ENCODE measurements at regions of chr3 and their contacts with region 1.

Region 1: GRCh38 chr3:179147873-179148615 is at the start of gene PIK3CA:
- DNase-seq: peak; percentile 71 to 99 (median 95)
- ATAC-seq: peak; percentile 88
- H3K4me3 ChIP-seq: peak within 1 kb of the TSS; percentile 87
- H3K4me3 Mint-ChIP-seq: peak within 1 kb of the TSS in 7 of 10 donors; percentile 95 to 100 (median 97)
- H3K27ac ChIP-seq: peak within 1 kb of the TSS; percentile 93
- H3K27ac Mint-ChIP-seq: peak within 1 kb of the TSS in 8 of 9 donors; percentile 94 to 99 (median 96)
- H3K4me1 ChIP-seq: peaks cover 15 to 17% of the 10 kb centered on the region in 2 donors
- H3K4me1 Mint-ChIP-seq: peaks cover 27 to 47% (median 41%) of the 10 kb centered on the region in 7 donors
- H3K27me3 ChIP-seq: no peaks in the 10 kb centered on the region
- H3K27me3 Mint-ChIP-seq: peaks cover 0 to 21% (median 0%) of the 10 kb centered on the region in 5 donors
- total RNA-seq, gene PIK3CA: 27.4 to 58.1 (median 43.7) TPM

Region 2: DNA sequence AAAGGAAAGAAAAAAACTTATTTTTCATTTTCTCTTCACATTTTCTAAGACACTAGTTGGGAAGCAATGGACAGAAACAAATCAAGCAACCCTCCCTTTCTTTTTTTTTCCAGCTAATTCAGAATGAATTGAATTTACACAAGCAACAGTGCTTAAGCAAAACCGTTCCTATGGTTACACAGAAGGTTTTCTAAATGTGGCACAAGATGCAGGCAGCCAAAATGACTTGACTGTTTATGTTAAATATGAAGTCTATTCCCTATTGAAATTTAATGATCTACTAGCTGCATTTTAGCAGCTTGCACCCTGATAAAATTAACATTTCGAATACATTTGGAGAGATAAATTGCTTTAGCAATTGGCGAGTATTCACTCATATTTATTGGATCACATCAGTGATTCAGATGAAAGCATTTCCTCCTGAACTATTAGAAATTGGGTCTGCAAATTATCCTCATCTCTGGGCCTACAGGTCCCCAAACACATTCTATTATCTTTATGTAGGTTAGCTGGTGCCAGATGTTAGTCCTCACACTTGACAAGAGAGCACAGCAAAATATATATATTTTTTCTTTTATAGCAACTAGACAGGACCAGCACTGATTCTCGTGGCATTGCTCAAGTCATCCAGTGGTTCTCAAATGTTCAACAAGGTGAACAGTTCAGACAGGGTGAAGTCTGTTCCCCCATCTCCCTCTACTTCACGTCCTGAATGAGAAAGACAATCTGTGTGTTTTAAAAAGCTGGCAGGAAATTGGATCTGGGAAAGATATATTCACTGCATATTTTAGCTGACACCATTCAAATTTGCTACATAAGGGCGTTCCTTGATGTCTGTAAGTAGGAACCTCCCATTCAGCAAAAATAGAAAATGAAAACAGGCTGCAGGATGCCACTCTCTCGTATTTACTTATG is 1075.4 kb before region 1 on chr3:
- CTCF ChIA-PET with region 1: no interaction called
- POLR2A ChIA-PET with region 1: no interaction called
- intact Hi-C with region 1: no loop called
- DNase-seq: no peak
- ATAC-seq: no peak
- H3K4me3 ChIP-seq: no peak overlapping the region
- H3K4me3 Mint-ChIP-seq: no peak overlapping the region
- H3K27ac ChIP-seq: no peak overlapping the region
- H3K27ac Mint-ChIP-seq: no peak overlapping the region
- H3K4me1 ChIP-seq: no peaks in the 10 kb centered on the region
- H3K4me1 Mint-ChIP-seq: peaks cover 4 to 6% (median 5%) of the 10 kb centered on the region in 7 donors
- H3K27me3 ChIP-seq: no peaks in the 10 kb centered on the region
- H3K27me3 Mint-ChIP-seq: peaks cover 0 to 2% (median 0%) of the 10 kb centered on the region in 5 donors

Region 3: DNA sequence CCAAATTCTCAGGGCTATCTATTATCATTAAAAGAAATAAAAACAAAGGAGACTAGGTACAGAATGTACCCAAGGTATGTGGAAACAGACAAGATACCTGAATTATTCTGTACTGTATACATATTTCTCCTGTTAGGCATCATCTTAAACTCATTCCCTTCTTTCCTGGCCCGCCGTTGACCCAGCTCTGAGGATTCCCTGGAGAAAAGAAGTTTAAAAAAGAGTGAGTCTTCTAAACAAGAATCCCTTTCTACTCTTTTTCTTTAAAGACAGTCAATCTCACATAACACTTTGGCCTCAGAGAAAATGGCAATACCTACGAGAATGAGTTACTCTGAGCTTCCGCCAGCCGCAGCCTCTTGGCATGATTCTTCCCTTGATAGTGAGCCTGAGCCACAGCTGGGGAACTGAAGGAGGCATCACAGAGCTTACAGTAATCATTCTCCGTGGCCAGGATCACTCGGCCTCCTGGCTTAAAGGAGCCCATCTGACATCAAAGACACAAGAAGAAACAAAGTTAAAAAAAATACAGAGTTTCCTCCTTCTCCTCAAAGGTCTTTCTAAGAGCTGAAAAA is 120.6 kb before region 1 on chr3:
- CTCF ChIA-PET with region 1: no interaction called
- POLR2A ChIA-PET with region 1: interaction called, 31 read pairs
- intact Hi-C with region 1: no loop called
- DNase-seq: peak in 7 of 9 donors; percentile 20 to 47 (median 31)
- ATAC-seq: peak; percentile 72
- H3K4me3 ChIP-seq: no peak overlapping the region
- H3K4me3 Mint-ChIP-seq: peak overlapping the region; percentile 47 to 86 (median 72)
- H3K27ac ChIP-seq: peak overlapping the region; percentile 58
- H3K27ac Mint-ChIP-seq: peak overlapping the region; percentile 76 to 97 (median 94)
- H3K4me1 ChIP-seq: peaks cover 0 to 26% of the 10 kb centered on the region in 2 donors
- H3K4me1 Mint-ChIP-seq: peaks cover 4 to 61% (median 42%) of the 10 kb centered on the region in 7 donors
- H3K27me3 ChIP-seq: no peaks in the 10 kb centered on the region
- H3K27me3 Mint-ChIP-seq: no peaks in the 10 kb centered on the region

Region 4: GRCh38 chr3:179158336-179159039 is 10.4 kb after region 1 on chr3:
- CTCF ChIA-PET with region 1: no interaction called
- POLR2A ChIA-PET with region 1: interaction called, 8 read pairs
- intact Hi-C with region 1: loop called in 1 of 2 experiments (anchors 1 kb)
- DNase-seq: no peak
- ATAC-seq: no peak
- H3K4me3 ChIP-seq: no peak overlapping the region
- H3K4me3 Mint-ChIP-seq: peak overlapping the region in 1 of 10 donors; percentile 39
- H3K27ac ChIP-seq: no peak overlapping the region
- H3K27ac Mint-ChIP-seq: no peak overlapping the region
- H3K4me1 ChIP-seq: peaks cover 0 to 14% of the 10 kb centered on the region in 2 donors
- H3K4me1 Mint-ChIP-seq: peaks cover 13 to 91% (median 80%) of the 10 kb centered on the region in 7 donors
- H3K27me3 ChIP-seq: no peaks in the 10 kb centered on the region
- H3K27me3 Mint-ChIP-seq: no peaks in the 10 kb centered on the region

Region 5: DNA sequence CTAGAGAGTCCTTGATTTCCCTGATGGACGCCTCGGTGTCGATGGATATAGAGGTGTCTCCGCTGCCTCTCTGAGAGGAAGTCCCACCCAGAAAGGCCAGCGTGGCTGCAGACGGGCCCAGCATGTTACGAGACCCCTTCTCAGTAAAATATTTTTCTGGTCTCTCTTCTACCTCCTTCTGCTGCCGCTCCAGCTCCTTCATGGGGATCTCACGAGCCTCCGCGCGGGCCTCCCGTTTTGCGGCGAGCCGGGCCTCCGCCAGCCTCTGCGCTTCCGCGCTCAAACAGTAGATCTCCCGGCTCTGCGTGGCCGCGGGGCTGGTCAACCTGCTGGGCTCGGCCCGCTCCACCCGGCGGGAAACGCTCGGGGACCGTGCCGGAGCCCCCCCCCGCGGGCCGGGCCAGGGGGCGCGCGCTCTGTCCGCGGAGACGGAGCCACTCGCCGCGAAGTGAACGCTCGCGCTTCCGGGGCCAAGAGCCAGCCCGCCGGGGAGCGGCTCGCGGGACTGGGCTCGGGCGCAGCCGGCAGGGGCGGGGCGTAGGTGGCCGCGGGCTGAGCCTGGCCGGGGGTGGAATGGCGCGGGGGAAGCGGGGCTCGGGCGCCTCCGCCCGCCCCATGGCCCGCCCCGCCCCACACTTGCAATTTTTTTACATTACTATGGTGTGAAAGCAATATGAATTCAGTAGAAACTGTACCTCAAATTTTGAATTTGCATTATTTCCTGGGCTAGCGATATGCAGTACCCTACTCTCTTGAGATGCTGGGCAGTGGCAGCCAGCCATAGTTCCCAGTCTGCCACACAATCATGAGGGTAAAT is 113.1 kb after region 1 on chr3:
- CTCF ChIA-PET with region 1: interaction called, 3 read pairs
- POLR2A ChIA-PET with region 1: interaction called, 8 read pairs
- intact Hi-C with region 1: loop called (anchors 1 kb)
- DNase-seq: peak; percentile 34 to 73 (median 60)
- ATAC-seq: peak; percentile 96
- H3K4me3 ChIP-seq: peak overlapping the region; percentile 66
- H3K4me3 Mint-ChIP-seq: peak overlapping the region; percentile 60 to 89 (median 83)
- H3K27ac ChIP-seq: peak overlapping the region; percentile 58
- H3K27ac Mint-ChIP-seq: peak overlapping the region; percentile 11 to 78 (median 59)
- H3K4me1 ChIP-seq: peaks cover 0 to 6% of the 10 kb centered on the region in 2 donors
- H3K4me1 Mint-ChIP-seq: peaks cover 4 to 29% (median 21%) of the 10 kb centered on the region in 7 donors
- H3K27me3 ChIP-seq: no peaks in the 10 kb centered on the region
- H3K27me3 Mint-ChIP-seq: peaks cover 0 to 20% (median 0%) of the 10 kb centered on the region in 5 donors

Region 6: GRCh38 chr3:179375091-179375999 is 227.3 kb after region 1 on chr3:
- CTCF ChIA-PET with region 1: no interaction called
- POLR2A ChIA-PET with region 1: no interaction called
- intact Hi-C with region 1: no loop called
- DNase-seq: no peak
- ATAC-seq: no peak
- H3K4me3 ChIP-seq: no peak overlapping the region
- H3K4me3 Mint-ChIP-seq: no peak overlapping the region
- H3K27ac ChIP-seq: no peak overlapping the region
- H3K27ac Mint-ChIP-seq: no peak overlapping the region
- H3K4me1 ChIP-seq: no peaks in the 10 kb centered on the region
- H3K4me1 Mint-ChIP-seq: no peaks in the 10 kb centered on the region
- H3K27me3 ChIP-seq: no peaks in the 10 kb centered on the region
- H3K27me3 Mint-ChIP-seq: no peaks in the 10 kb centered on the region

Region 7: GRCh38 chr3:179451265-179452175 is 303.5 kb after region 1 on chr3 and contains the start of gene GNB4:
- CTCF ChIA-PET with region 1: no interaction called
- POLR2A ChIA-PET with region 1: no interaction called
- intact Hi-C with region 1: loop called in 1 of 2 experiments (anchors 1 kb)
- DNase-seq: peak in 8 of 9 donors; percentile 8 to 72 (median 32)
- ATAC-seq: peak; percentile 91
- H3K4me3 ChIP-seq: peak within 1 kb of the TSS; percentile 39
- H3K4me3 Mint-ChIP-seq: peak within 1 kb of the TSS; percentile 77 to 90 (median 86)
- H3K27ac ChIP-seq: no peak within 1 kb of the TSS
- H3K27ac Mint-ChIP-seq: peak within 1 kb of the TSS in 2 of 9 donors; percentile 62 to 84
- H3K4me1 ChIP-seq: peaks cover 0 to 10% of the 10 kb centered on the region in 2 donors
- H3K4me1 Mint-ChIP-seq: peaks cover 14 to 29% (median 23%) of the 10 kb centered on the region in 7 donors
- H3K27me3 ChIP-seq: peaks cover 4% of the 10 kb centered on the region in 2 donors
- H3K27me3 Mint-ChIP-seq: peaks cover 57 to 87% (median 75%) of the 10 kb centered on the region in 5 donors
- total RNA-seq, gene GNB4: 1.1 to 11.3 (median 2.1) TPM

Region 8: DNA sequence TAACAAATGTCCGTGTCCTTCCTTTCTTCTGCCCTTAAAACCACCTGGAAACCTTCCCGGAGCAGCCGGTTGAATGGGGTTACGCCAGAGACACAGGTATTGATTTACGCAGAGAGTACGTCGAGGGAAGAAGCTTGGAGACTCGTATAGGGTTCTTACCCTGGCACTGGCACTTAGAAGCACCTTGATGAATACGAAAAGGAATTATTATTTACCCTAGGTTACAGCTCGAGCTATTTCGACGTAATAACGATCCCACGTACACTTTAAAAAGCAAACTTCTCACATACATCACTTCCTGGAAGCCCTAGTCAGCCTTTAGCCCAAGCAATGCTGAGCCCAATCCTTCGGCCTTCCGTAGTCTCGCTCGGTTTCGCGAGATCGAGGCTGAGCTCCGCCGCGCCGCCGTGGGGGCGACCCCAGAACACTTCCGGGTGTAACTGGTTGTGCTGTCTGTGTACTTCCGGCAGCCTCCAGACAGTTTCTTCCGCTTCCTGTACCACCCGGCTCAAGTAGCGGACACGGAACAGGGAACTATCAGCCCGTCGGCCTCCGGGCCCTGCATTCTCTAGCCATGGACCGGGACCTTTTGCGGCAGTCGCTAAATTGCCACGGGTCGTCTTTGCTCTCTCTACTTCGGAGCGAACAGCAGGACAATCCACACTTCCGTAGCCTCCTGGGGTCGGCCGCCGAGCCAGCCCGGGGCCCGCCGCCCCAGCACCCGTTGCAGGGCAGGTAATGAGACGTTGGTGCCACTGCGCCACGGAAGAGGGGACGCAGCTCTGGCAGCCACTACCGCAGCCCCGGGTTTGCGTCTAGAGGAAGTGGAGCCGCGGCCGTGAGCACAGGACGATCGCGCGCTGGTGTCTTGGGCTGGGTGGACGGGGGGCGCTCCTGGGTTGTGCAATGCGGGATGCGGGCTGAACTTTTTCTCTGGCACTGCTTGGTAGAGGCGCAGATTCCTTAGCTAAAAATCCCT is 1453.9 kb after region 1 on chr3 and contains the start of gene TTC14:
- CTCF ChIA-PET with region 1: no interaction called
- POLR2A ChIA-PET with region 1: no interaction called
- intact Hi-C with region 1: loop called (anchors 1 kb)
- DNase-seq: peak; percentile 80 to 94 (median 92)
- ATAC-seq: peak; percentile 94
- H3K4me3 ChIP-seq: peak within 1 kb of the TSS; percentile 92
- H3K4me3 Mint-ChIP-seq: peak within 1 kb of the TSS; percentile 88 to 98 (median 96)
- H3K27ac ChIP-seq: peak within 1 kb of the TSS; percentile 88
- H3K27ac Mint-ChIP-seq: peak within 1 kb of the TSS; percentile 92 to 99 (median 97)
- H3K4me1 ChIP-seq: peaks cover 12% of the 10 kb centered on the region in 2 donors
- H3K4me1 Mint-ChIP-seq: peaks cover 14 to 47% (median 39%) of the 10 kb centered on the region in 7 donors
- H3K27me3 ChIP-seq: no peaks in the 10 kb centered on the region
- H3K27me3 Mint-ChIP-seq: peaks cover 4 to 23% (median 18%) of the 10 kb centered on the region in 5 donors
- total RNA-seq, gene TTC14: 76.5 to 201 (median 103) TPM